ENCODE measurements at regions of chr17 and their contacts with region 1.

Region 1: DNA sequence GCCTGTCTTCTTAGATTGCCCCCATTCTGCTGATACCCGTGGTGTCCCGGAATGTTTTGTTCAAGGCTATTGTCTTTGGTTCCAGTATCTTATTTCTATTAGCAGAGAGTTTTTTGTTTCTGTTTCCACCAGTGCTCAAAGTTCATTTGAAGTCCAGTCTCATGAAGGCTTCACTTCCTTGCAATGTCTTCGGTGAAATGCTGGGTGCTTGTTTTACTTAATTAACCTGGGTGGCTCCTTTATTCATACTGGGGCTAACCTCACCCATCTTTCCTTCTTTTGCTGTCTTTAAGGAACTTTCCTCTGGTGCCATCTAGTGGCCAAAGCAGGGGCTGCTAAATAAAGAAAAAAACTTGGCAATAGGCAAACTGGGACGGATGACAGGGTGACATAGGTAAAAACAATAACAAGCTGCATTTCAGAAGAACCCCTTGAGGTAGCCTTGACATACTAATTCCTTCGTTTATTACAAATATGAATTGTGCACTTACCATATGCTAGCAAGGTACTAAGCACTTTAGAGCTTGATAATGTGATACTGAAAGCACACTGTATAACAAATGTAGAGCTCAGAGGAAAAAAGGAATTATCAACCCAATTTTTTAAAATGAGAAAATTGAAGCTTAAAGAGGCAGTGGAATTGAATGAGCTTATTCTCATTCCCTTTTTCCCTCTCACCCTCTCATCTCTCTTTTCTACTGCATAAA is 2.8 kb upstream of the SMIM36 start:
- DNase-seq: peak; percentile 55
- ATAC-seq: peak; percentile 72
- H3K4me3 ChIP-seq: no peak overlapping the region
- H3K27ac ChIP-seq: no peak overlapping the region
- H3K4me1 ChIP-seq: no peaks in the 10 kb centered on the region
- H3K27me3 ChIP-seq: peaks cover 11% of the 10 kb centered on the region
- CTCF ChIP-seq: peak; percentile 95
- POLR2A ChIP-seq: no peak
- RAD21 ChIP-seq: peak; percentile 91

Region 2: DNA sequence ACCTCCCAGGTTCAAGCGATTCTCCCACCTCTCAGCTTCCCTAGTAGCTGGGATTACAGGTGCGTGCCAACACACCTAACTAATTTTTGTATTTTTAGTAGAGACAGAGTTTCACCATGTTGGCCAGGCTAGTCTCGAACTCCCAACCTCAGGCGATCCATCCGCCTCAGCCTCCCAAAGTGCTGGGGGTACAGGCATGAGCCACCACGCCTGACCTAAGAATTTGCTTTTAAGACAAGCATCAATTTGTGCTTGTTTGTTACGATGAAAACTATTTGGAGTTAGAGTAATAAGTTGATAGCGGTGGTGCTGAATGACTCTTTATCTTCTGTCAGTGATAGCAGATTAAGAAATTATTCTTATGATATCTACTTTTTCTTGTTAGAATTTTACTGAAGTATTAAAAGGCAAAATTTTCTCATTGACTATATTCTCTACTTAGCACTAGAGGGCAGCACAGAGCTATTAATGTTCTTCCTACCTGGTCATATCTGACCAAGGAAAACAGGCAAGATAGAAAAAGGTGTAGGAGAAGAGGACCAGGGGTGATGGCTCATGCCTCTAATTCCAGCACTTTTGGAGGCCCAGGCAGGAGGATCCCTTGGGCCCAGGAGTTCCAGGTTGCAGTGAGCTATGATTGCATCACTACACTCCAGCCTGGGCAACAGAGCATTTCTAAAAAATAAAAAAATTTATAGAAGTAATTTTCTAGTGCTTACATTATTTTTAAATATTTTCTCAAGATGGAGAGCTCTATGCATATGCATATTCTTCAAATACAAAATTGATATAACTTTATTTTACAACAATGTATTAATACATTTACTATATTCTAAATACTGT is 521.0 kb before region 1 on chr17:
- CTCF ChIA-PET with region 1: interaction called, 3 read pairs
- POLR2A ChIA-PET with region 1: no interaction called
- dilution Hi-C with region 1: no loop called
- in situ Hi-C with region 1: no loop called
- intact Hi-C with region 1: loop called (anchors 1 kb)
- DNase-seq: peak; percentile 54
- ATAC-seq: peak; percentile 75
- H3K4me3 ChIP-seq: no peak overlapping the region
- H3K27ac ChIP-seq: no peak overlapping the region
- H3K4me1 ChIP-seq: no peaks in the 10 kb centered on the region
- H3K27me3 ChIP-seq: no peaks in the 10 kb centered on the region
- CTCF ChIP-seq: peak; percentile 72
- POLR2A ChIP-seq: no peak
- RAD21 ChIP-seq: peak; percentile 69

Region 3: GRCh38 chr17:55295411-55296170 is 218.4 kb before region 1 on chr17:
- CTCF ChIA-PET with region 1: no interaction called
- POLR2A ChIA-PET with region 1: no interaction called
- dilution Hi-C with region 1: no loop called
- in situ Hi-C with region 1: no loop called
- intact Hi-C with region 1: loop called (anchors 5 kb)
- DNase-seq: peak; percentile 43
- ATAC-seq: peak; percentile 96
- H3K4me3 ChIP-seq: no peak overlapping the region
- H3K27ac ChIP-seq: no peak overlapping the region
- H3K4me1 ChIP-seq: no peaks in the 10 kb centered on the region
- H3K27me3 ChIP-seq: peaks cover 4% of the 10 kb centered on the region; the same call in 1 of the 2 replicates
- CTCF ChIP-seq: peak; percentile 83
- POLR2A ChIP-seq: no peak
- RAD21 ChIP-seq: peak; percentile 77

Region 4: DNA sequence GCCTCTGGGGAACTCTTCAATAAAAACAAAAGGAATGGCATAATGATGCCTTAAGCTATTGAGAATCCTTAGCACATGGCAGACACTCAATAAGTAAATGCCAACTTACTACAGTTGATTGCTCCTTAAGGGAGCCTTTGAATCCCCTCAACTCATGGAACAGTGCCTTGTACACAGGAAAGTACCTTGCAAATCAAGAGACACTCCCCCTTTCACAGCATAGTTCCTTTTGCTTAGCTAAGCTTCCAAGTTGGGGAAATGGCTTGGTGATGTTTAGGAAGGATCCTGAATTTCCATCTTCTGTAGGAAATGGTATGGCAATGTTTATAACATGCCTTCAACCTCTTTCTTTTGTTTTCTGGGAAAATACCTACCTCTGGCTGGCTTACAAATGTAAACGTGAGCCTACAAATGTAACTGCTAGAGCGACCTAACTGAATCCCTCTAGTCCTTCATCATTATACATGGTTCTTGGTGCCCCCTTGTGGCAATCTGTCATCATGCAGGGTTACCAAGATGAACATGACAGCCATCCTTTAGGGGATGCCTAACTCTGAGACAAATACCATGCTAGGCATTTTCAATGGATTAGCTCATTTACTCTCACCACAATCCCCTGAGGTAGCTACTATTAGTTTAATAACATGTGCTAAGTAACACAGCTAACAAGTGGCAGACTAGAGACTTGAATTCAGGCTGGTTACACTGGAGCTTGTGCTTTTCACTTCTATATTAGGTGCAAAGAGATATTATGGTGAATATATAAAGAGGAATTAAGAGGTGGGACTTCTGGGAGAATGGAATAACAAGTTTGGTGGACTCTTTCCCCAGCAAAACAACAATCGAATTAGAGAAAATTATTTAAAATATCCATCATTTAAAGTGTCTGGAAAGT is 157.4 kb before region 1 on chr17:
- CTCF ChIA-PET with region 1: interaction called, 7 read pairs
- POLR2A ChIA-PET with region 1: no interaction called
- dilution Hi-C with region 1: no loop called
- in situ Hi-C with region 1: loop called (anchors 5 kb)
- intact Hi-C with region 1: loop called (anchors 5 kb)
- DNase-seq: peak; percentile 57
- ATAC-seq: peak; percentile 92
- H3K4me3 ChIP-seq: no peak overlapping the region
- H3K27ac ChIP-seq: no peak overlapping the region
- H3K4me1 ChIP-seq: no peaks in the 10 kb centered on the region
- H3K27me3 ChIP-seq: peaks cover 2% of the 10 kb centered on the region; the same call in 1 of the 2 replicates
- CTCF ChIP-seq: peak; percentile 58
- POLR2A ChIP-seq: no peak
- RAD21 ChIP-seq: peak; percentile 50

Region 5: GRCh38 chr17:55421179-55421934 is 92.7 kb before region 1 on chr17 and contains the start of gene MMD:
- CTCF ChIA-PET with region 1: interaction called, 4 read pairs
- POLR2A ChIA-PET with region 1: no interaction called
- dilution Hi-C with region 1: no loop called
- in situ Hi-C with region 1: no loop called
- intact Hi-C with region 1: loop called (anchors 1 kb)
- DNase-seq: no peak
- ATAC-seq: peak; percentile 52
- H3K4me3 ChIP-seq: peak within 1 kb of the TSS; percentile 79
- H3K27ac ChIP-seq: peak within 1 kb of the TSS; percentile 62
- H3K4me1 ChIP-seq: peaks cover 5% of the 10 kb centered on the region
- H3K27me3 ChIP-seq: peaks cover 2% of the 10 kb centered on the region; the same call in 1 of the 2 replicates
- CTCF ChIP-seq: no peak
- POLR2A ChIP-seq: no peak
- RAD21 ChIP-seq: no peak
- total RNA-seq, gene MMD: 7.0 and 11.9 TPM in 2 replicates

Region 6: DNA sequence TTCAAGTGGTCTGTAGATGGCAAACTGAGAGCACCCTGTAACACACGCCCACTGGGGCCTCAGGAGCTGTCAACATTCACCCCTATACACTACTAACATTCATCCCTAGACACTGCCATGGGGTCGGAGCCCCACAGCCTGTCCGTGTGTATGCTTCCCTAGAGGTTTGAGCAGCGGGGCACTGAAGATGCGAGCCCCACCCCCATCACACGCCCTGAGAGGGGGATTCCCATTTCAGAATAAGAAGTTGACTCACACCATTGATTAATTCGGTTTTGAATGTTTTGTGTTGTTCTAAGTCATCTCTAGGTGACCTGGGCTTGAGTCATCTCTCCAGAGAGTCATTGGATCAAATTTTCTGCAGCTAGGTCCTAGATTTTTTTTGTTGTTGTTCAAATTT is 55.1 kb before region 1 on chr17:
- CTCF ChIA-PET with region 1: no interaction called
- POLR2A ChIA-PET with region 1: no interaction called
- dilution Hi-C with region 1: no loop called
- in situ Hi-C with region 1: no loop called
- intact Hi-C with region 1: no loop called
- DNase-seq: peak; percentile 89
- ATAC-seq: 0 out of 2 replicates have a peak, but pooled peaks have one; percentile 7
- H3K4me3 ChIP-seq: no peak overlapping the region
- H3K27ac ChIP-seq: no peak overlapping the region
- H3K4me1 ChIP-seq: peaks cover 13% of the 10 kb centered on the region
- H3K27me3 ChIP-seq: no peaks in the 10 kb centered on the region
- CTCF ChIP-seq: no peak
- POLR2A ChIP-seq: no peak
- RAD21 ChIP-seq: no peak

Region 7: GRCh38 chr17:55549140-55549539 is 35.1 kb after region 1 on chr17:
- CTCF ChIA-PET with region 1: no interaction called
- POLR2A ChIA-PET with region 1: no interaction called
- dilution Hi-C with region 1: no loop called
- in situ Hi-C with region 1: no loop called
- intact Hi-C with region 1: no loop called
- DNase-seq: no peak
- ATAC-seq: no peak
- H3K4me3 ChIP-seq: no peak overlapping the region
- H3K27ac ChIP-seq: no peak overlapping the region
- H3K4me1 ChIP-seq: no peaks in the 10 kb centered on the region
- H3K27me3 ChIP-seq: peaks cover 3% of the 10 kb centered on the region; the same call in 1 of the 2 replicates
- CTCF ChIP-seq: no peak
- POLR2A ChIP-seq: no peak
- RAD21 ChIP-seq: 0 out of 2 replicates have a peak, but pooled peaks have one; percentile 14

Region 8: DNA sequence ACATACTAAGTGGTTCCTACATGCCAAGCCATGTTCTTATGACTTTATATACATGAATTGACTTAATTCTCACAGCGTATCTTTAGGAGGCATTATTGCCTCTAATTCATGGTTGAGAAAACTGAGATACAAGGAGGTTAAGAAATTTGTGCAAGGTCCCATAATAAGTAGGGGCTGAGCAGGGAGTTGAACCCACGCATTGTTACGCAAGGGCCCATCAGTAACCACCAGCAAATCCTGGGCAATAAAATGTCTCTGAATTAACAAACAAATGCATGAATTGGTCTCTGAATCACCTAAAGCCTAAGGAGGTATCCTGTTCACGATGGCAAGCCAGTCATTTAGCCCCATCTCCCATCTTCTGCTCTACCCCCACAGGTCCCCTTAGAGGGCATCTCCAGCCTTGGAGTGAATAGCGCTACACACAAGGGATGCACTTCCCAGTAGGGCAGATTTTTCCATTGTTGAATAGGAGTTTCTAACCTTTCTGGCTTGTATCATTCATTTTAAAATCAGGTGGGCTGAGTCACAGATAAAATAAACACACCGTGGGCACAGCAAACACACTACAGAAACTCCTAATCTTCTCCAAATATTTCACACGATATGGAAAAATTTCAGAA is 878.1 kb after region 1 on chr17:
- CTCF ChIA-PET with region 1: no interaction called
- POLR2A ChIA-PET with region 1: no interaction called
- dilution Hi-C with region 1: no loop called
- in situ Hi-C with region 1: no loop called
- intact Hi-C with region 1: no loop called
- DNase-seq: no peak
- ATAC-seq: no peak
- H3K4me3 ChIP-seq: no peak overlapping the region
- H3K27ac ChIP-seq: no peak overlapping the region
- H3K4me1 ChIP-seq: no peaks in the 10 kb centered on the region
- H3K27me3 ChIP-seq: no peaks in the 10 kb centered on the region
- CTCF ChIP-seq: no peak
- POLR2A ChIP-seq: no peak
- RAD21 ChIP-seq: no peak

Measured in IMR-90 (cell line).